ENCODE measurements at regions of chr12 and their contacts with region 1.

Region 1: DNA sequence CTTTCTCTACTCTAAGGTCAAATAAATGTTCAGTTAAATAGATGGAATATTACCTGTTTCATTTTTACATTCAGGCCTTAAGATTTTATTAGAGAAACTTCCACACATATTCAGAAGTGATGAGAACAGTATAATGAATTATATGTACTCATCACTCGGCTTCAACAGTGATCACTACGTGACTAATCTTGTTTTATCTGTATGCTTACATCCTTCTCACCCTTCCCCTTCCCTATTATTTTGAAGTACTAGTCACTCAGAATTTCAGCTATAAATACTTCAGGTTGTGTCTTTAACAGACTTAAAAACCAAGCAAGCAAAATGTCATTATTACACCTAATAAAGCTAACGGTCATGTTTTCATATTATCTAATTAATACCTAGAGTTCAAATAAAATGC is 34.9 kb downstream of the ETV6 start:
- DNase-seq: no peak
- H3K4me3 ChIP-seq: no peak overlapping the region
- H3K27me3 ChIP-seq: no peaks in the 10 kb centered on the region
- CTCF ChIP-seq: no peak

Region 2: GRCh38 chr12:11695321-11695720 is 10.9 kb after region 1 on chr12:
- CTCF ChIA-PET with region 1: no interaction called
- POLR2A ChIA-PET with region 1: interaction called, 15 read pairs
- DNase-seq: no peak
- H3K4me3 ChIP-seq: no peak overlapping the region
- H3K27me3 ChIP-seq: no peaks in the 10 kb centered on the region
- CTCF ChIP-seq: no peak

Region 3: DNA sequence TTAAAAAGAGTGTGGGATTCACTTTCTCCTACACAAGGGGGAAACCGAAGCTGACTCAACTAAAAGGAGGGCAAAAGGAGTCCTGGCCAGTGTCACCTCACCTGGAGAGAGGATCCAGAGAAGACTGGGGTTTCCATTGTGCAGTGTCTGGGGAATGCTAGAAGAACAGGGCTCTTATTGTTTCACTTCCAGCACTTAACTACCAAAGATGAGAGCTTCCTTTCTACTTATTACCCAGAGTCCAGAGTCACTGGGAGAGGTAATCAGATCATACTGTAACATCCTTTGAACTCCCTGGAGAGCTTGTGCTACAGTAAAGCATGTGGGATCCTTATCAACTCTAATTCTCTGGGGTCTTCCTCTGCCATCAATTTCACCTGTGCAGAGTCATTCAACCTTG is 238.0 kb after region 1 on chr12:
- CTCF ChIA-PET with region 1: no interaction called
- POLR2A ChIA-PET with region 1: interaction called, 17 read pairs
- DNase-seq: no peak
- H3K4me3 ChIP-seq: no peak overlapping the region
- H3K27me3 ChIP-seq: peaks cover 9% of the 10 kb centered on the region; the same call in 1 of the 2 replicates
- CTCF ChIP-seq: no peak

Measured in BJ (cell line).